ENCODE measurements at regions of chr20 and their contacts with region 1.

Region 1: DNA sequence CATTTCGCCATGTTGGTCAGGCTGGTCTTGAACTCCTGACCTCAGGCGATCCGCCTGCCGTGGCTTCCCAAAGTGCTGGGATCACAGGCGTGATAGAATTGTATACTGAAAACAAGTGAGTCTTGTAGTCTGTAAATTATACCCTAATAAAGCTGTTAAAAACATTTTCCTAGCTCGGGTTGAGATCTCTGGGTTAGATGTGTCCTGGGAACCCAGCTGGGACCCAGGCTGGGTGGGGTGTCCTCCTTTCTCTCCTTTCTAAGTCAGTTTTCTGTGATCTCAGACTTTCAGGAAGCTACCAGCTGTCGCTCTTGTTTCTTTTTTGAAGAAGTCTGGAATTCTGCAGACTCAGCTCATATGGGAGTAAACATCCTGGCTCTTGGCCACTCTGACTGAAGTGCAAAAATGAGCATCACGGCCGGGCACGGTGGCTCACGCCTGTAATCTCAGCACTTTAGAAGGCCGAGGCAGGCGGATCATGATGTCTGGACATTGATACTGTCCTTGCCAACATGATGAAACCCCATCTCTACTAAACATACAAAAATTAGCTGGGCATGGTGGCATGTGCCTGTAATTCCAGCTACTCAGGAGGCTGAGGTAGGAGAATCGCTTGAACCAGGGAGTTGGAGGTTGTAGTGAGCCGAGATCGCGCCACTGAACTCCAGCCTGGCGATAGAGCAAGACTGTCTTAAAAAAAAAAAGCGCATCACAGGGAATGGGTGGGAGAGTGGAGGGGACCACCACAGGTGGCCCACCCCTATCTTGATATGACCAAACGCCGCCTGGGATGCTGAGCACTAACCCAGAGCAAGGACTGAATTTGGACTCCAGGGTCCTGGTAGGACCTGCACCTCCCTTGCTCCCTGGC is 9.9 kb upstream of the PCIF1 start:
- DNase-seq: no peak
- H3K4me3 ChIP-seq: no peak overlapping the region
- H3K27ac ChIP-seq: no peak overlapping the region
- H3K4me1 ChIP-seq: peaks cover 3 to 7% (median 5%) of the 10 kb centered on the region in 4 experiments; a peak in 5 of 7 replicates
- H3K27me3 ChIP-seq: no peaks in the 10 kb centered on the region
- CTCF ChIP-seq: no peak
- EP300 ChIP-seq: no peak
- POLR2A ChIP-seq: no peak
- RAD21 ChIP-seq: no peak

Region 2: DNA sequence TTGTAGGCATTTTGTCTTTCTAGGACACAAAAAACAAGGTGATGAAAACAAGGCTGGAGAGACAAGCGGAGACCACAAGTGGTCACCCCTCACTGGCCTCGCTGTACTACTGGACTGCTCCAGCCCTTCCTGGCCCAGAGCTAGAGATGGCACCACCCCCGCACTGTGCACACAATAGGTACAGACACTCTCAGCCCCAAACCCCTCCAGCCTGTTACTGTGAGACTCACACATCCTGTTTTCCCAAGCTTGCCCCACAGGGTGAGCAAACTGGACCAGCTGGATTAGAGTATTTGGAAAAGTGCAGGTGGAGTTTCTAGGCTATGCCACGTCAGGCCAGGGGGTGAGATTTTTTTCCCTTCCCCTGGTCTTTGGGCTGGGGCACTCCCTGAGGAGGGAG is 52.0 kb before region 1 on chr20:
- CTCF ChIA-PET with region 1: no interaction called
- POLR2A ChIA-PET with region 1: no interaction called
- DNase-seq: no peak
- H3K4me3 ChIP-seq: no peak overlapping the region
- H3K27ac ChIP-seq: no peak overlapping the region
- H3K4me1 ChIP-seq: no peaks in the 10 kb centered on the region
- H3K27me3 ChIP-seq: no peaks in the 10 kb centered on the region
- CTCF ChIP-seq: no peak
- EP300 ChIP-seq: no peak
- POLR2A ChIP-seq: no peak
- RAD21 ChIP-seq: no peak

Region 3: GRCh38 chr20:45910670-45911485 is 13.7 kb before region 1 on chr20:
- CTCF ChIA-PET with region 1: interaction called, 5 read pairs
- POLR2A ChIA-PET with region 1: interaction called, 65 read pairs
- DNase-seq: peak; percentile 99 to 100
- H3K4me3 ChIP-seq: peak overlapping the region; percentile 52 to 81 (median 70)
- H3K27ac ChIP-seq: peak overlapping the region; percentile 58; the same call in 1 of the 2 replicates
- H3K4me1 ChIP-seq: peaks cover 0 to 2% (median 0%) of the 10 kb centered on the region in 4 experiments; a peak in 3 of 7 replicates
- H3K27me3 ChIP-seq: no peaks in the 10 kb centered on the region
- CTCF ChIP-seq: no peak
- EP300 ChIP-seq: no peak
- POLR2A ChIP-seq: peak; percentile 59 to 68; a peak in 2 of 3 replicates
- RAD21 ChIP-seq: no peak